ENCODE measurements at regions of chr20 and their contacts with region 1.

Region 1: DNA sequence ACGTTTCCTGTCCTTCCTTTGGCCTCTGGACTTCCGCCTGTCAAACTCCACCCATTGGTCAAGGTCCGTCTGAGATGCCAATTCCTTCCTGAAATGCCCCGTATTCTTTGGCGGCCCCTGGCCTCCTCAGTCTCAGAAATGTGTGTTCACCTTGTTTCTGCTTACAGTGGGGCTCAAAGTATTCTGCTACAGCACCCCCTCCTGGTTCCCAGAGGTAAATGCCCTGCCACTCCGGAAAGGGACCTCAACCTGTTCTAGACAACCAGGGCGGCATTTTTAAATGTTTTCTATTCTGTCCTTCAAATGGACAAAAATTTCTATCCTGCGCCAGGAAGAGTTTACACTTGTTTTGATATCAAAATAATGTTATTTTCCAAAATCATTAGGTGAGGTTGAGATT is 12.1 kb upstream of the PAX1 start:
- DNase-seq: peak; percentile 38 to 53 (median 47)
- ATAC-seq: peak; percentile 86
- H3K4me3 ChIP-seq: no peak overlapping the region
- H3K27ac ChIP-seq: no peak overlapping the region
- H3K4me1 ChIP-seq: no peaks in the 10 kb centered on the region; a peak in 1 of 5 replicates
- H3K27me3 ChIP-seq: peaks cover 0 to under 1% of the 10 kb centered on the region in 2 experiments; a peak in 1 of 5 replicates
- CTCF ChIP-seq: peak; percentile 55 to 65 (median 62)
- EP300 ChIP-seq: no peak
- POLR2A ChIP-seq: no peak
- RAD21 ChIP-seq: peak; percentile 52 to 59

Region 2: GRCh38 chr20:21618759-21619416 is 74.4 kb before region 1 on chr20:
- CTCF ChIA-PET with region 1: no interaction called
- POLR2A ChIA-PET with region 1: no interaction called
- in situ Hi-C with region 1: no loop called
- intact Hi-C with region 1: no loop called
- DNase-seq: peak in 1 of 4 experiments; percentile 6
- ATAC-seq: peak; percentile 55; the same call in 1 of the 3 replicates
- H3K4me3 ChIP-seq: no peak overlapping the region
- H3K27ac ChIP-seq: no peak overlapping the region
- H3K4me1 ChIP-seq: no peaks in the 10 kb centered on the region; a peak in 1 of 5 replicates
- H3K27me3 ChIP-seq: no peaks in the 10 kb centered on the region
- CTCF ChIP-seq: no peak
- EP300 ChIP-seq: no peak
- POLR2A ChIP-seq: no peak
- RAD21 ChIP-seq: no peak

Region 3: DNA sequence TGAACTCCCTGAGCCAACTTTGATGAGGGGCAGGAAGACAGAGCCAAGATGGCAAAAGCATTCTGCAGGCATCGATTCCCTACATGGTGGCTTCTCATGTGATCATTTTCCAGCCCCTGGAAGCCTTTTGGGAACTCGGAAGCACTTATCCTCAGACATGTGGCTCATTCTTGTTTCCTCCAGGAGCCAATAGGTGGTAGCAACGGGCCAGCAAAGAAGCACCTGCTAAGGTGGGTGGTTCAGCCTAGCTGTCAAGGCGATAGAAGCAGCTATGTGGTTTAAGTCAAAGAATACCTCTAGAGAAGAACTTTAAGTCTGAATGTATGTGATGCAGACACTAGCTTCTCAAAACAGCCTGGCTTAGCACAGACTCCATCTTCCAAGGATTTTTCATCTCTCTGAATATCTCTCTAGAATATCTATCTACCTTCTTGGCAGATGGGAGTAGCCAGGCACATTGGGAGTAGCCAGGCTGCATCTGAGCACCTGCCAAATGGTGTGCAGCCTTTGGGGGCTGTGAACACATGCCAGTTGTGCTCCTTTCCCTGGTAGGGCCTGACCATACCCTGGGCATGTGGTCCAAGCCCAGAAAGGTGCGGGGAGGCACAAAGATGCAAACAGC is 52.6 kb before region 1 on chr20:
- CTCF ChIA-PET with region 1: interaction called, 19 read pairs
- POLR2A ChIA-PET with region 1: no interaction called
- in situ Hi-C with region 1: no loop called
- intact Hi-C with region 1: loop called (anchors 1 kb)
- DNase-seq: peak in 2 of 4 experiments; percentile 13 to 32
- ATAC-seq: peak; percentile 85
- H3K4me3 ChIP-seq: no peak overlapping the region
- H3K27ac ChIP-seq: no peak overlapping the region
- H3K4me1 ChIP-seq: no peaks in the 10 kb centered on the region; a peak in 1 of 5 replicates
- H3K27me3 ChIP-seq: no peaks in the 10 kb centered on the region
- CTCF ChIP-seq: peak; percentile 43 to 73 (median 57)
- EP300 ChIP-seq: no peak
- POLR2A ChIP-seq: no peak
- RAD21 ChIP-seq: peak; percentile 55 to 62

Region 4: GRCh38 chr20:21795955-21796458 is 102.7 kb after region 1 on chr20:
- CTCF ChIA-PET with region 1: no interaction called
- POLR2A ChIA-PET with region 1: no interaction called
- in situ Hi-C with region 1: no loop called
- intact Hi-C with region 1: no loop called
- DNase-seq: peak in 1 of 4 experiments; percentile 6
- ATAC-seq: no peak
- H3K4me3 ChIP-seq: no peak overlapping the region
- H3K27ac ChIP-seq: no peak overlapping the region
- H3K4me1 ChIP-seq: no peaks in the 10 kb centered on the region
- H3K27me3 ChIP-seq: no peaks in the 10 kb centered on the region
- CTCF ChIP-seq: 0 out of 6 replicates have a peak, but pooled peaks of 1 of the 3 experiments have one; percentile 12
- EP300 ChIP-seq: no peak
- POLR2A ChIP-seq: no peak
- RAD21 ChIP-seq: no peak

Region 5: DNA sequence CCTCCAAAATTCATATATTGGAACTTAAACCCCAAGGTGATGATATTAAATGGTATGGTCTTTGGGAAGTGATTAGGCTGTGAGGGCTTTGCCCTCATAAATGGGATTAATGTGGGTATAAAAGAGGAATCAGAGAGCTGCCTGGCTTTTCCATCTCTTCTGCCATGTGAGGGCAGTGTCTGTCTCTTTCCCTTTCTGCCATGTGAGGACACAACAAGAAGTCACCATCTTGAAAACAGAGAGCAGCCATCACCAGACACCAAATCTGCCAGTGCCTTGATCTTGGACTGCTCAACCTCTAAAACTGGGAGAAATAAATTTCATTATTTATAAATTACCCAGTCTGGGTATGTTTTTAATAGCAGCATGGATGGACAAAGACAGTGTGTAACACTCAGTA is 275.2 kb after region 1 on chr20:
- CTCF ChIA-PET with region 1: no interaction called
- POLR2A ChIA-PET with region 1: no interaction called
- in situ Hi-C with region 1: no loop called
- intact Hi-C with region 1: no loop called
- DNase-seq: no peak
- ATAC-seq: no peak
- H3K4me3 ChIP-seq: no peak overlapping the region
- H3K27ac ChIP-seq: no peak overlapping the region
- H3K4me1 ChIP-seq: no peaks in the 10 kb centered on the region
- H3K27me3 ChIP-seq: no peaks in the 10 kb centered on the region
- CTCF ChIP-seq: no peak
- EP300 ChIP-seq: no peak
- POLR2A ChIP-seq: no peak
- RAD21 ChIP-seq: no peak

Measured in K562 (cell line).